ENCODE measurements at regions of chr6 and their contacts with region 1.

Region 1: DNA sequence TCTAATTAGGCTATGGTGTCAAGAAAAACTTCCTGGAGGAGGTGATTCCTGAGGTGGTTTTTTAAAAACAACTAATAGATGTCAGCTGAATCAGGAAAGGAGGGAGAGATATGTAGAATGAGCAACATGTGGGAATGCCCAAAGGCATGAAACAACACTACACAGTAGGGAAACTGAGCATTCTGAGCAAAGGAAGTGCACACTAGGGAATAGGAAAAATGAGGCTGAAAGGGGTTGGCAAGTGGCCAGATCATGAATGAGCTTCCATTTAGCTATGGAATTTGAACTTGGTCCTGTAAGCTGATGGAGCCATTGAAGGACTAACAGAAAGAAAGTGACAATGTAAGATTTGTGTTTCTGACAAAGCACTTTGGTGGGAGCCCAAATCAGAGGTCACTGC is 16.9 kb upstream of the SLC35F1 start:
- DNase-seq: no peak
- H3K4me3 ChIP-seq: no peak overlapping the region
- H3K27ac ChIP-seq: no peak overlapping the region
- H3K4me1 ChIP-seq: no peaks in the 10 kb centered on the region
- H3K27me3 ChIP-seq: peaks cover 0 to 4% of the 10 kb centered on the region in 2 donors
- CTCF ChIP-seq: no peak
- POLR2A ChIP-seq: no peak

Region 2: GRCh38 chr6:116287689-116288282 is 1602.4 kb before region 1 on chr6:
- intact Hi-C with region 1: no loop called
- DNase-seq: no peak
- H3K4me3 ChIP-seq: no peak overlapping the region
- H3K27ac ChIP-seq: no peak overlapping the region
- H3K4me1 ChIP-seq: no peaks in the 10 kb centered on the region
- H3K27me3 ChIP-seq: no peaks in the 10 kb centered on the region
- CTCF ChIP-seq: peak; percentile 69 to 75 (median 73)
- POLR2A ChIP-seq: no peak

Region 3: DNA sequence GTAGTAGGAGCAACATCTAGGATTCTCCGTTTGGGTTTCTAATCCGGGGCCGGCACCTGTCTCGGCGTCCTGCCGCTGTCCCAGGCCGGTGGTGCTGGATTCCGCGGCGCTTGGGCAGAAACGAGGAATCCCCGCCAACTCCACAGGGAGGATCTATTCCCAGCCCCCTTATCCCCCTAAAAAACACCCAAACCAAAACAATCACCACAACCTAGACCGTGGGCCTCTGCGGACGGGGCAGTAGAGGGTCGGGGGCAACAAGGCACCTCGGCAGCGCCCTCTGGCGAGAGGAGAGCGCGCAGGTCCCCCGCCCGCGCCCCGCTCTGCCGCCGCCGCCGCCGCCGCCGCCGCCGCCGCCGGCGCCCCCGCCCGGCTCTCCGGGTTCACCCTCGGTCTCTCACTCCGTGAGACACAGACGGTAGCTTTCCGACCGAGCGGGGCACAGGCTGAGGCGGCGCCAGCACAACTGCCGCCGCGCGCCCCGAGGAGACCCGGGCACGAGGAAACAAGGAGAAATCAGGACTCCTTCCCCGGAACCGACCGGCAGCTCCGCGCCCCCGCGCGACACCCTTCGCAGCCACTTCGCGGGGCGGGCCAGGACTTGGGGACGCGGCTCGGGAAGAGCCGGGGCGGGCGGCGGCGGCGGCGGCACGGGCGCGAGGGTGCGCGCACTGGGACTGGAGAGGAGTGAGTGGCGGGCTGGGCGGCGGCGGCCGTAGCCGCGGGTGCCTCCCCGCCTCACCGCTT is 16.9 kb after region 1 on chr6 and contains the start of gene SLC35F1:
- intact Hi-C with region 1: loop called (anchors 1 kb)
- DNase-seq: no peak
- H3K4me3 ChIP-seq: peak within 1 kb of the TSS; percentile 47 to 74 (median 59)
- H3K27ac ChIP-seq: no peak within 1 kb of the TSS
- H3K4me1 ChIP-seq: peaks cover 0 to 6% of the 10 kb centered on the region in 2 donors
- H3K27me3 ChIP-seq: peaks cover 0 to 38% of the 10 kb centered on the region in 2 donors
- CTCF ChIP-seq: no peak
- POLR2A ChIP-seq: no peak
- total RNA-seq, gene SLC35F1: 0.66 to 2.5 (median 0.80) TPM

Region 4: DNA sequence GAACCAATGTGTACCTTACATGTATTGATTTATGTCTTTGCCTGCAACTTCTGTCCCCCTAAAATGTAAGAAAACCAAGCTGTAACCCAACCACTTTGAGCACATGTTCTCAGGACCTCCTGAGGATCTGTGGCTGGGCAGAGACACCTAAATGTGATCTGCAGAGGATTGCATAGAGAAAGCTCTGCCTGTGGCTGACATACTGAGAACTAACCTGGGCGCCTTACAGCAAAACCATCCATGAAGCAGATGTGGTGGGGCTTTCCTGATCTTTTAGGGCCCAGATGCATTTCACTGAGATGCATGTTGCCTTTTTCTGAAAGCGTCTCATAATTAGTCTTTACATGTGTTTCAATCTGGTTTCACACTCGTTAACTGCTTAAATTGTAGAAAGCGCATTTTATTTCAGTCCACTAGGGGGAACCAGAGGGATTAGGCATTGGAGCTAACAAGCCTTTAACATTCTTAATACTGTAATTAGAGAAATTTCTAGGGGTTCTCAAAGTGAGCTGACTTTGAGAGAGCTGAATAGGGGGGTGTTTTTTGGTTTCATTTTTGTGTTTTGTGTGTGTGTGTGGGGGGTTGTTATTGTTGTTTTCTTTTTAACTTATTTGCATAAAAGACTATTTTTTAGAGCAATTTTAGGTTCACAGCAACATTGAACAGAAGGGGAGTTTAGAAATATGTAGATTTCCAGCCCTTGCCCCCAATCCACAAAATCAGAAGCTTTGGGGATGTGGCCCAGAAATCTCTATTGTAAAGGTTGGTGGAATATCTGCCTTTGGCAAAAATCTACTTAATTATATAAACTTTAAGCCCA is 1239.2 kb after region 1 on chr6:
- intact Hi-C with region 1: no loop called
- DNase-seq: no peak
- H3K4me3 ChIP-seq: no peak overlapping the region
- H3K27ac ChIP-seq: no peak overlapping the region
- H3K4me1 ChIP-seq: no peaks in the 10 kb centered on the region
- H3K27me3 ChIP-seq: no peaks in the 10 kb centered on the region
- CTCF ChIP-seq: peak; percentile 65 to 78 (median 75)
- POLR2A ChIP-seq: no peak